Pancreas (tissue), 10 donors: ENCODE measurements at regions of chr18 and their contacts with region 1.

Region 1: GRCh38 chr18:12890506-12890905 is 6.5 kb upstream of the PTPN2 start:
- DNase-seq: no peak
- ATAC-seq: peak in 1 of 4 donors; percentile 32
- H3K4me3 ChIP-seq: no peak overlapping the region
- H3K27ac ChIP-seq: no peak overlapping the region
- H3K4me1 ChIP-seq: no peaks in the 10 kb centered on the region
- H3K27me3 ChIP-seq: peaks cover 0 to 5% (median 0%) of the 10 kb centered on the region in 4 donors
- CTCF ChIP-seq: no peak

Region 2: DNA sequence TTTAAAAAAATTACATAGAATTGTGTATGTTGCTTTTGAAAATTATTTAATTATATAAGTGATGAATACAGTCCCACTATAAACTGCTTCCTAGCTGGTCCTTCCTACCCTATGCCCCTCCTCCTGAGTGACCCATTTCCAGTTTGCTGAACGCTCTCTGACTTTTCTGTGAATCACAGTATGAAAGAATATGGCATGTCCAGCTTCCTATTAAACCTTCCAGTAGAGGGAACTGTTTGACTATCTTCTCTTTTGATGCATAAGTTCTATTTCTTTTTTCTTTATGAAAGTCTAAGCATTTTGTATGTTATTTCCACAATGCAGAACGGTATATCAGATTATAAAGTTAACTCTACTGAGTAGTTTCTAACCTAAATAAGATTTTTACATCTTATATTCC is 146.4 kb before region 1 on chr18:
- intact Hi-C with region 1: loop called in 2 of 3 experiments (anchors 5 to 10 kb)
- DNase-seq: no peak
- ATAC-seq: peak in 3 of 4 donors; percentile 66 to 73 (median 70)
- H3K4me3 ChIP-seq: no peak overlapping the region
- H3K27ac ChIP-seq: no peak overlapping the region
- H3K4me1 ChIP-seq: no peaks in the 10 kb centered on the region
- H3K27me3 ChIP-seq: no peaks in the 10 kb centered on the region
- CTCF ChIP-seq: peak in 3 of 4 donors; percentile 5 to 55 (median 25)